ENCODE measurements at regions of chr19 and their contacts with region 1.

Region 1: DNA sequence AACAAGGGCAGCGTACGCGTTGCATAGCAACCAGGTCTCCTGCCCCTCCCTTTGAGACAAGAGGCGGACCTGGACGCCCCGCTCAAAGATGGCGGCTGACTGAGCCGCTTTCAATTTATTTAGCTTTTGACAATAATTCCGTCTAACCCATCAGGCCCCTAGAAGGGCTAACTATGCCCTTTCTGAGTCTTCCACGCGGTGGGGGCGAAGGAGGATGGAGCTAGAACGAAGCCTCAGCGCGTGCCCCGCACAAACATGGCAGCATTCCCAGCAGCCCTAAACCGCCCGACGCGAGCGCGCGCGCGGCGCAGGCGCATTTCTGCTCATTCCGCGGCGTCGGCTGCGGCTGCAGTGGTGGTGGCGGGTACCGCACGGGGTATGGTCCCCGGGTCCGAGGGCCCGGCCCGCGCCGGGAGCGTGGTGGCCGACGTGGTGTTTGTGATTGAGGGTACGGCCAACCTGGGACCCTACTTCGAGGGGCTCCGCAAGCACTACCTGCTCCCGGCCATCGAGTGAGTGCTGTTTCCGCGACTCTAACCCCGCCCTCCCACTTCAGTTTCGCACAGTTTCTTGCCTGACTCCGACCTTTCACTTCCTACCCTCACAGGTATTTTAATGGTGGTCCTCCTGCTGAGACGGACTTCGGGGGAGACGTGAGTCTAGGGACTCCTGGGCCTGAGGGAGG is at the start of gene MED25:
- DNase-seq: peak; percentile 69 to 89
- H3K4me3 ChIP-seq: peak within 1 kb of the TSS; percentile 84
- H3K27ac ChIP-seq: peak within 1 kb of the TSS; percentile 72
- H3K4me1 ChIP-seq: peaks cover 24% of the 10 kb centered on the region
- H3K27me3 ChIP-seq: no peaks in the 10 kb centered on the region
- CTCF ChIP-seq: no peak
- total RNA-seq, gene MED25: 92.2 and 99.6 TPM in 2 replicates

Region 2: DNA sequence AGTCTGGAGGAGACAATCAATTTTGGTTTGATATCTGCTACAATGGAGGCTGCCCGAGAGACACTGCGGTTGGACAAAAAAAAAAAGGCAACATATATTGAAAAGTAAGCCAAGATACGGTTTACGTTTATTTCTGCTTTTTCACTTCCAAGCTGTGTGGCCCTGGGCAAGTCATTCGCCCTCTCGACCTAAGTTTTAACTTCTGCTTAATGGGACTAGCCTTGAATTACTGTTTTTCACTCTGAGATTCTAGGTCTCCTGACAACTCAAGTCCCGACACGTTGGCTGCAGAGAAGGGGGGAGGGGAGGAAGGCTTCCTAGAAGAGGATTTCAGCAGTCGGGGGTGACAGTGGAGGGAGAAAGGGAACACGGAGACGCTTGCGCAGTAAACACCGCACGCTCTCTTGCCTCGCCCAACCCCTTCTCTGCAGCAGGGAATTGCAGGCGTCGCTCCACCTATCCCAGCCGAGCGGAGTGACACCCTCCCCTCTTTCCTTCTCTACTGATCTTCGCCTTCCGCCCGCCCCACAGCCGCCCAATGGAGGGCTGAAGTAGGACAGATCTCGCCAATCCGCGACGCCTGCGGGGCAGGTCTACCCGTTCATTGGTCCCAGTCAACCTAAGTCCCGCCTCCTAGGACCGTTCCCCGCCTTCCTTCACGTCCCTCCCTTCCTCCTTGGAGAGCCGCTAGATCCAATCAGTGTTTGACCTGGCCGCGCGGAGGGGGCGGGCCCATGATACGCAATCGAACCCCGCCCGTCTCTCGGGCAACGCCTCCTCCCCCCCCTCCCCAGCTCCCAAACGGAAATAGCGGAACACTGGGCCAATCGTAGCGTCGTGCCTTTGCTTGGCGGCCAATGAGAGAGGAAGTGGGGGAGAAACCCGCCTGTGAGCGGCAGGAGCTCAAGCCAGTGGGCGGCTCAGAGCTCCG is 51.8 kb before region 1 on chr19:
- CTCF ChIA-PET with region 1: interaction called, 7 read pairs
- POLR2A ChIA-PET with region 1: no interaction called
- intact Hi-C with region 1: loop called (anchors 1 kb)
- DNase-seq: peak; percentile 99
- H3K4me3 ChIP-seq: peak overlapping the region; percentile 59
- H3K27ac ChIP-seq: peak overlapping the region; percentile 88
- H3K4me1 ChIP-seq: peaks cover 17% of the 10 kb centered on the region
- H3K27me3 ChIP-seq: no peaks in the 10 kb centered on the region
- CTCF ChIP-seq: no peak

Region 3: GRCh38 chr19:49850473-49851342 is 32.6 kb after region 1 on chr19 and contains the start of gene PTOV1:
- CTCF ChIA-PET with region 1: interaction called, 21 read pairs
- POLR2A ChIA-PET with region 1: no interaction called
- intact Hi-C with region 1: loop called (anchors 1 kb)
- DNase-seq: peak; percentile 76 to 92
- H3K4me3 ChIP-seq: peak within 1 kb of the TSS; percentile 99
- H3K27ac ChIP-seq: peak within 1 kb of the TSS; percentile 90
- H3K4me1 ChIP-seq: peaks cover 37% of the 10 kb centered on the region
- H3K27me3 ChIP-seq: no peaks in the 10 kb centered on the region
- CTCF ChIP-seq: no peak
- total RNA-seq, gene PTOV1: 151 and 155 TPM in 2 replicates